GM12878 (cell line): ENCODE measurements at regions of chr2 and their contacts with region 1.

Region 1: DNA sequence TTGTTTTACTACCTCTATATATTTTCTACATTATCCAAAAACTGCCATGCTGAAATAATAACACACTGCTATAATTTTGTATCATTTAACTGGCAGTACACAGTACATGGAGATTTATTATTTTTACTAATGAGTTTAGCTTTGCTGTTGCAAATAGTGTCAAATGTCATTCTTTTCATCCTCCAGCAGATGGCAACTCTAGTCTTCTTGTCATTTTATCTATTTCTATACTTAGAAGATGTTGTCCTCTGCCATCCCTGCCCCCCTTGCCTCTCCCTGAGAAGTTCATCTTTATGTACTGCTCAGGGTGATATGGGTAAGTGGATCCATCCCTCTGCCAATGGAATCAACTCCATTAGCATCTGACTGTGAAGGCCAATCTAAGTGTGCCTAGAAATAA is 21.7 kb upstream of the LRRTM1 start:
- DNase-seq: peak; percentile 17
- ATAC-seq: peak; percentile 75
- H3K4me3 ChIP-seq: no peak overlapping the region
- H3K27ac ChIP-seq: no peak overlapping the region
- H3K4me1 ChIP-seq: no peaks in the 10 kb centered on the region; the same call in 1 of the 2 replicates
- H3K27me3 ChIP-seq: peaks cover 0 to 6% of the 10 kb centered on the region in 2 experiments; a peak in 2 of 4 replicates
- CTCF ChIP-seq: peak; percentile 33 to 65 (median 43); a peak in 4 of 6 replicates
- EP300 ChIP-seq: no peak
- POLR2A ChIP-seq: no peak
- RAD21 ChIP-seq: peak; percentile 64

Region 2: GRCh38 chr2:80238692-80239469 is 87.3 kb before region 1 on chr2:
- CTCF ChIA-PET with region 1: interaction called, 10 read pairs
- POLR2A ChIA-PET with region 1: no interaction called
- RAD21 ChIA-PET with region 1: no interaction called
- SMC1A ChIA-PET with region 1: interaction called, 5 read pairs
- in situ Hi-C with region 1: no loop called
- intact Hi-C with region 1: no loop called
- DNase-seq: no peak
- ATAC-seq: peak; percentile 69
- H3K4me3 ChIP-seq: no peak overlapping the region
- H3K27ac ChIP-seq: no peak overlapping the region
- H3K4me1 ChIP-seq: no peaks in the 10 kb centered on the region
- H3K27me3 ChIP-seq: no peaks in the 10 kb centered on the region
- CTCF ChIP-seq: peak; percentile 49 to 80 (median 78)
- EP300 ChIP-seq: no peak
- POLR2A ChIP-seq: no peak
- RAD21 ChIP-seq: peak; percentile 16; the same call in 1 of the 2 replicates

Region 3: DNA sequence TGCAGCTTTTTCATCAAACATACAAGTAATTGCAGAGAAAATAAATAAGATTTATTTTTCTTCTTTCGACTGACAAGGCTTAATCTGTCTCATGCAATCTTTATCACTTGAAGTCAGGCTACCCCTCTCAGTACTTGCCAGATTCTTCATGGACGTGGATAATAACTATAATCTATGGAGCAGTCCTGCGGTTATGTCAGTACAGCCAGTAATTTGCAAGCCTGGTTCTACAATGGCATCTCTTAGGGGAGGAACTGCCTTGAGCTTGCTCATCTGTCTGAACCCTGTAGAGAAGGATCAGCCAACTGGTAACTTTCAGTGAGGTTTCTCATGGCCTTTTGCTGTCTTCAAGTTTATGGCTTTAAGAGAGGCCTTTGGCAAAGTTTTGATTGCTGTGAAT is 13.8 kb after region 1 on chr2:
- CTCF ChIA-PET with region 1: interaction called, 16 read pairs
- POLR2A ChIA-PET with region 1: no interaction called
- RAD21 ChIA-PET with region 1: interaction called, 4 read pairs
- SMC1A ChIA-PET with region 1: interaction called, 7 read pairs
- in situ Hi-C with region 1: no loop called
- intact Hi-C with region 1: no loop called
- DNase-seq: no peak
- ATAC-seq: no peak
- H3K4me3 ChIP-seq: no peak overlapping the region
- H3K27ac ChIP-seq: no peak overlapping the region
- H3K4me1 ChIP-seq: no peaks in the 10 kb centered on the region
- H3K27me3 ChIP-seq: no peaks in the 10 kb centered on the region
- CTCF ChIP-seq: no peak
- EP300 ChIP-seq: no peak
- POLR2A ChIP-seq: no peak
- RAD21 ChIP-seq: no peak

Region 4: GRCh38 chr2:80365762-80366161 is 39.5 kb after region 1 on chr2:
- CTCF ChIA-PET with region 1: interaction called, 4 read pairs
- POLR2A ChIA-PET with region 1: no interaction called
- RAD21 ChIA-PET with region 1: interaction called, 9 read pairs
- SMC1A ChIA-PET with region 1: interaction called, 20 read pairs
- in situ Hi-C with region 1: no loop called
- intact Hi-C with region 1: no loop called
- DNase-seq: no peak
- ATAC-seq: peak; percentile 89
- H3K4me3 ChIP-seq: no peak overlapping the region
- H3K27ac ChIP-seq: no peak overlapping the region
- H3K4me1 ChIP-seq: no peaks in the 10 kb centered on the region
- H3K27me3 ChIP-seq: no peaks in the 10 kb centered on the region
- CTCF ChIP-seq: no peak
- EP300 ChIP-seq: peak in 1 of 2 experiments; percentile 48; a peak in 1 of 4 replicates
- POLR2A ChIP-seq: no peak
- RAD21 ChIP-seq: no peak

Region 5: GRCh38 chr2:80461505-80462197 is 135.4 kb after region 1 on chr2:
- CTCF ChIA-PET with region 1: interaction called, 8 read pairs
- POLR2A ChIA-PET with region 1: interaction called, 3 read pairs
- RAD21 ChIA-PET with region 1: interaction called, 29 read pairs
- SMC1A ChIA-PET with region 1: interaction called, 41 read pairs
- in situ Hi-C with region 1: no loop called
- intact Hi-C with region 1: loop called (anchors 10 kb)
- DNase-seq: no peak
- ATAC-seq: peak; percentile 61
- H3K4me3 ChIP-seq: no peak overlapping the region; the same call in 1 of the 2 replicates
- H3K27ac ChIP-seq: 0 out of 2 replicates have a peak overlapping the region, but pooled peaks have one; percentile 4
- H3K4me1 ChIP-seq: peaks cover 3% of the 10 kb centered on the region; the same call in 1 of the 2 replicates
- H3K27me3 ChIP-seq: no peaks in the 10 kb centered on the region; a peak in 1 of 4 replicates
- CTCF ChIP-seq: no peak
- EP300 ChIP-seq: no peak
- POLR2A ChIP-seq: no peak
- RAD21 ChIP-seq: no peak

Region 6: GRCh38 chr2:80473796-80474195 is 147.6 kb after region 1 on chr2:
- CTCF ChIA-PET with region 1: interaction called, 4 read pairs
- POLR2A ChIA-PET with region 1: interaction called, 7 read pairs
- RAD21 ChIA-PET with region 1: interaction called, 15 read pairs
- SMC1A ChIA-PET with region 1: interaction called, 30 read pairs
- in situ Hi-C with region 1: no loop called
- intact Hi-C with region 1: loop called (anchors 10 kb)
- DNase-seq: no peak
- ATAC-seq: 0 out of 3 replicates have a peak, but pooled peaks have one; percentile 11
- H3K4me3 ChIP-seq: no peak overlapping the region
- H3K27ac ChIP-seq: no peak overlapping the region; the same call in 1 of the 2 replicates
- H3K4me1 ChIP-seq: peaks cover 8% of the 10 kb centered on the region
- H3K27me3 ChIP-seq: no peaks in the 10 kb centered on the region
- CTCF ChIP-seq: no peak
- EP300 ChIP-seq: no peak
- POLR2A ChIP-seq: no peak
- RAD21 ChIP-seq: no peak

Region 7: DNA sequence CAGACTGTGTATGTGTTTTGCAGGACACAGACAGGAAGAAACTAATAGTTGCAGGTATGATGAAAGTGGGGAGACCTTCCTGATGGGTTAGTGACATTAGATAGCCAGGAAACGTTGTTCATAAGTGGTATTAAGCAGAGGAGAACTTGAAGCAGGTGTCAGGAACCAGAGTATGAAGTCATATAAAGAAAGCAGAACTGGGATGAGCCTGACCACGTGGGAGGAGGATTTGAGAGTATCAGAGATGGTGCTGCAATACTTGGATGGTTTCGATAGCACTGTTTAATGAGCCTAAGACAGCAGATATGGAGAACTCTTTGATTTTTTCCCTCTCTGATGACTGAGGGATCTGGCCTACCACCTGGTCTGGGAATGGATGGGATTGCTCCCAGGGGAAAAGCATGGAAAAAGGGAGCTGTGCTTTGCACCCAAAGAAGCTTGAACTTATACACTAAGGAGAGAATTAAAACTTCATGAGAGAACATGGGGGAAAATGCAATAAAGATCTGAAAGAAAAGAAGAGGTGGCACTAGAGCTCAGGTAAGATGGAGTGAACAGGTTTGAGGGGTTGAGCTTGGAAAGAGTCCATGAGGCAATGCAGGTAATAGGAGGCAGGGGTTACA is 204.3 kb after region 1 on chr2:
- CTCF ChIA-PET with region 1: interaction called, 20 read pairs
- POLR2A ChIA-PET with region 1: interaction called, 3 read pairs
- RAD21 ChIA-PET with region 1: interaction called, 16 read pairs
- SMC1A ChIA-PET with region 1: interaction called, 32 read pairs
- in situ Hi-C with region 1: no loop called
- intact Hi-C with region 1: loop called (anchors 1 kb)
- DNase-seq: peak; percentile 82
- ATAC-seq: peak; percentile 76
- H3K4me3 ChIP-seq: no peak overlapping the region
- H3K27ac ChIP-seq: peak overlapping the region; percentile 92
- H3K4me1 ChIP-seq: peaks cover 40% of the 10 kb centered on the region
- H3K27me3 ChIP-seq: no peaks in the 10 kb centered on the region
- CTCF ChIP-seq: no peak
- EP300 ChIP-seq: peak; percentile 86 to 96
- POLR2A ChIP-seq: no peak
- RAD21 ChIP-seq: no peak

Region 8: GRCh38 chr2:80549901-80550300 is 223.7 kb after region 1 on chr2:
- CTCF ChIA-PET with region 1: no interaction called
- POLR2A ChIA-PET with region 1: no interaction called
- RAD21 ChIA-PET with region 1: no interaction called
- SMC1A ChIA-PET with region 1: no interaction called
- in situ Hi-C with region 1: no loop called
- intact Hi-C with region 1: no loop called
- DNase-seq: no peak
- ATAC-seq: no peak
- H3K4me3 ChIP-seq: no peak overlapping the region
- H3K27ac ChIP-seq: no peak overlapping the region
- H3K4me1 ChIP-seq: no peaks in the 10 kb centered on the region
- H3K27me3 ChIP-seq: no peaks in the 10 kb centered on the region
- CTCF ChIP-seq: no peak
- EP300 ChIP-seq: no peak
- POLR2A ChIP-seq: no peak
- RAD21 ChIP-seq: no peak